ENCODE measurements at regions of chr4 and their contacts with region 1.

Region 1: DNA sequence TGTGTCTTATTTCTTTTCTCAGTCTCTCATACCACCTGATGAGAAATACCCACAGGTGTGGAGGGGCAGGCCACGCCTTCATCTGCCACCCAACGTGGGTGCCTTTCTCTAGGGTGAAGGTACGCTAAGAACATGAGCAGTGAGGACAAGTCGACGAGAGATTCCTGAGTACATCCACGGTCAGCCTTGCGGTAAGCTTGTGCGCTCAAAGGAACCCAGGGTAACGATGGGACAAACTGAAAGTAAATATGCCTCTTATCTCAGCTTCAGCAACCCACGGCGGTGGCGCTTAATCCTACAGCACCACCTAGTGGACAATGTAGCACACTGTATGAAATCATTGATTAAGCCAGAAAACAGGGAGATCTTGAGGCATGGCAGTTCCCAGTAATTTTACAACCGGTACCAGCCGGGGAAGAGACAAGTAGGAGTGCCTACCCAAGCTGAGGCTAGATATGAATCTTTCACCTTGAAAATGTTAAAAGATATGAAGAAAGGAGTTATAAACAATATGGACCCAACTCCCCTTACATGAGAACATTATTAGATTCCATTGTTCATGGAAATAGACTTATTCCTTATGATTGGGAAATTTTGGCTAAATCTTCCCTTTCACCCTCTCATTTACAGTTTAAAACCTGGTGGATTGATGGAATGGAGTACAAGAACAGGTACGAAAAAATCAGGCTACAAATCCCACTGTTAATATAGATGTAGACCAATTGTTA is 63.0 kb downstream of the ZNF732 start:
- DNase-seq: peak; percentile 44
- ATAC-seq: peak; percentile 94
- H3K4me3 Mint-ChIP-seq: peak overlapping the region; percentile 89
- H3K27ac Mint-ChIP-seq: peak overlapping the region; percentile 89
- H3K4me1 Mint-ChIP-seq: peaks cover 13% of the 10 kb centered on the region
- H3K27me3 Mint-ChIP-seq: no peaks in the 10 kb centered on the region
- CTCF ChIP-seq: no peak

Region 2: DNA sequence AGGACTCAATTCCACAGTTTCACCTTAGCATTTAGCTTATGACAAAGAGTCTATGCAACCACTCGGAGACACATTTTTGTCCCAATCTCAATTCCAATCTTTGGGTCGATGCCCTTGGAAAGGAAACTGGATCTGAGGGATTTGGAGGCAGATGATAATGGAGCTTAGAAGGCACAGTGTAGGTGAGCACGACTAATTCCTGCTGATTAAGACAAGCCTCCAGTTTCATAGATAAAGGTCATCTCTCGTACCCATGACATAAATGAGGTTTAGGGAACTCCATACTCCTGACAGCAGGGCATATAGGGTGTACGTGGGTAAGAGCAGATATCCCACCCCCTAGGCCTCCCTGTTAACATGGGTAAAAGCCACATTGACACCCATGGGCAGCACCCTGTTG is 142.4 kb before region 1 on chr4:
- CTCF ChIA-PET with region 1: no interaction called
- POLR2A ChIA-PET with region 1: no interaction called
- intact Hi-C with region 1: no loop called
- DNase-seq: no peak
- ATAC-seq: no peak
- H3K4me3 Mint-ChIP-seq: no peak overlapping the region
- H3K27ac Mint-ChIP-seq: no peak overlapping the region
- H3K4me1 Mint-ChIP-seq: no peaks in the 10 kb centered on the region
- H3K27me3 Mint-ChIP-seq: no peaks in the 10 kb centered on the region
- CTCF ChIP-seq: no peak

Region 3: DNA sequence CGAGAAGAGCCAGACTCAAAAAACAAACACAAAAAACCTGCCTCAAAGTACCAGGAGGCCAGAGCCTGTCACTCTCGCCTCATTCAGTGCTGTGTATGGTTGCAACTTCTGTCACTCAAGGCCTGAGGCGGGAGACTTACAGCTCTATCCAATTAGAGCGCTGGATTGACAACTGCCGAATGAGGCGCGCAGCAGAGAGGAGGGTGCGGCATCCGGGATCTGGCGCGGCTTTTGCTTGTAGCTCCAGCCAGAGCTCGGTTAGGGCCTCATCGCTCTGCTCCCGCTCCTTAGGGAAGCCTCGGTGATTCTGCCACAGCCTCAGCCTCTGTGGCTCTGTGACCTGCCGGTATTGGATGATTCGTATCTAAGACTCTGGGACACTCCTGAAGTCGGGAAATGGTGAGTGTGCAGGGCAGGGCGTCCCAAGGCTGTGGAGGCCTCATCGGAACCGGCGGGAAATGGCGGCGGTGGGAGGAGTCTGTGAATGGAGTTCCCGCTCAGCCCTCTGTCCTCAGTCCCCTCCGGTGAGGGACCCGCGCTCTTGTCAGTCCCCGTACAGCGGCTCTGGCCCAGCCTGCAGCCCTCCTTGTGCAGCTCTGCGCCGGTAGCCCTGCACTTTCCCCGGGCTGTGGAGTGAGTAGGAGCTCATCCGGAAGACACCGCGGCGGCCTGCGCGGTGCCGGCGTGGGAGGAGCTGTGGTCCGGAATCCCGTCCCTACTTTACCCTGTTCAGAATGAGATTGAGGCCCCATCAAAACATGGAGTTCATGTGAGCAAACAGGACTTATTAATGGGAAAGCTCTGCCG is 117.8 kb before region 1 on chr4 and contains the start of gene ZNF718:
- CTCF ChIA-PET with region 1: interaction called, 7 read pairs
- POLR2A ChIA-PET with region 1: interaction called, 3 read pairs
- intact Hi-C with region 1: loop called (anchors 5 kb)
- DNase-seq: peak; percentile 80
- ATAC-seq: peak; percentile 97
- H3K4me3 Mint-ChIP-seq: peak within 1 kb of the TSS; percentile 100
- H3K27ac Mint-ChIP-seq: peak within 1 kb of the TSS; percentile 99
- H3K4me1 Mint-ChIP-seq: peaks cover 32% of the 10 kb centered on the region
- H3K27me3 Mint-ChIP-seq: no peaks in the 10 kb centered on the region
- CTCF ChIP-seq: no peak
- total RNA-seq, gene ZNF718: 9.3 and 10.9 TPM in 2 replicates

Region 4: DNA sequence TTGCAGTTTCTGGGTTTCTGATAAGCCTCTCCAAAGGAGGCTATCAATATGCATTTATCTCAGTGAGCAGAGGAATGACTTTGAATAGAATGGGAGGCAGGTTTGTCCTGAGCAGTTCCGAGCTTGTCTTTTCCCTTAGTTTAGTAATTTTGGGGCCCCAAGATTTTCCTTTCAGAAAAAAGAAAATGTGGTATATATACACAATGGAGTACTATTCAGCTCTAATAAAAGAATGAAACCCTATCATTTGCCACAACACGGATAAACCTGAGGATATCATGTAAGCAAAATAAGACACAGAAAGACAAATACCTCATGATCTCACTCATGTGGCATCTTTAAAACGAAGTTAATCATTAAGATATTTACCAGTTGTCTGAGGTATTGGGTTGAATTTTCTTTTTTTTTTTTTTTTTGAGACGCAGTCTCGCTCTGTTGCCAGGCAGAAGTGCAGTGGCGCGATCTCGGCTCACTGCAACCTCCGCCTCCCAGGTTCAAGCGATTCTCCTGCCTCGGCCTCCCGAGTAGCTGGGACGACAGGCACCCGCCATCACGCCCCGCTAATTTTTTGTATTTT is 256.1 kb after region 1 on chr4:
- CTCF ChIA-PET with region 1: no interaction called
- POLR2A ChIA-PET with region 1: no interaction called
- intact Hi-C with region 1: loop called (anchors 1 kb)
- DNase-seq: no peak
- ATAC-seq: peak; percentile 25
- H3K4me3 Mint-ChIP-seq: peak overlapping the region; percentile 93
- H3K27ac Mint-ChIP-seq: peak overlapping the region; percentile 95
- H3K4me1 Mint-ChIP-seq: peaks cover 32% of the 10 kb centered on the region
- H3K27me3 Mint-ChIP-seq: no peaks in the 10 kb centered on the region
- CTCF ChIP-seq: no peak

Region 5: GRCh38 chr4:1628892-1629698 is 1386.8 kb after region 1 on chr4:
- CTCF ChIA-PET with region 1: no interaction called
- POLR2A ChIA-PET with region 1: no interaction called
- intact Hi-C with region 1: loop called (anchors 10 kb)
- DNase-seq: peak; percentile 62
- ATAC-seq: peak; percentile 81
- H3K4me3 Mint-ChIP-seq: no peak overlapping the region
- H3K27ac Mint-ChIP-seq: no peak overlapping the region
- H3K4me1 Mint-ChIP-seq: no peaks in the 10 kb centered on the region
- H3K27me3 Mint-ChIP-seq: no peaks in the 10 kb centered on the region
- CTCF ChIP-seq: peak; percentile 75